Right lobe of liver (tissue), 6 donors: ENCODE measurements at regions of chr3 and their contacts with region 1.

Region 1: GRCh38 chr3:124492811-124493210 is 237.4 kb upstream of the UMPS start:
- DNase-seq: peak; percentile 76 to 78 (median 77)
- ATAC-seq: peak; percentile 94 to 98 (median 96)
- H3K4me3 ChIP-seq: no peak overlapping the region
- H3K27ac ChIP-seq: no peak overlapping the region
- H3K4me1 ChIP-seq: no peaks in the 10 kb centered on the region
- H3K27me3 ChIP-seq: no peaks in the 10 kb centered on the region
- CTCF ChIP-seq: peak; percentile 60 to 73 (median 65)
- POLR2A ChIP-seq: no peak

Region 2: DNA sequence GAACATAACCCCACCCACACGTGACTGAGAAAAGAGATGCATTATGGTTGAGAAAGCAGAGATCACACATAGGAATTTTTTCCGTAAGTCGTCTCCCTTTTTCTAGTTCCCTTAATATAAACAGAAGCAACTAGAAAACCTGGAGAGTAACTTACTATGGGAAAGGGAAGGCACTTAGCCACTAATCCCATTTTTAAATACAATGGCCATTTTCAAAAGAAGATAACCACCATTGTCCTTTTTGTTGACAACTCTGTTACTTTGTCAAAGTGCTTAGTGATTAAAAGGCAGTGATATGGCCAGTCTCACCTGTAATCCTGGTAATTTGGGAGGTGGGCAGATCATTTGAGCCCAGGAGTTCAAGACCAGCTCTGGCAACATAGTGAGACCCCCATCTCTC is 53.1 kb after region 1 on chr3:
- intact Hi-C with region 1: loop called (anchors 5 to 10 kb)
- DNase-seq: no peak
- ATAC-seq: no peak
- H3K4me3 ChIP-seq: no peak overlapping the region
- H3K27ac ChIP-seq: no peak overlapping the region
- H3K4me1 ChIP-seq: peaks cover 0 to 4% (median 0%) of the 10 kb centered on the region in 4 donors
- H3K27me3 ChIP-seq: no peaks in the 10 kb centered on the region
- CTCF ChIP-seq: no peak
- POLR2A ChIP-seq: no peak

Region 3: DNA sequence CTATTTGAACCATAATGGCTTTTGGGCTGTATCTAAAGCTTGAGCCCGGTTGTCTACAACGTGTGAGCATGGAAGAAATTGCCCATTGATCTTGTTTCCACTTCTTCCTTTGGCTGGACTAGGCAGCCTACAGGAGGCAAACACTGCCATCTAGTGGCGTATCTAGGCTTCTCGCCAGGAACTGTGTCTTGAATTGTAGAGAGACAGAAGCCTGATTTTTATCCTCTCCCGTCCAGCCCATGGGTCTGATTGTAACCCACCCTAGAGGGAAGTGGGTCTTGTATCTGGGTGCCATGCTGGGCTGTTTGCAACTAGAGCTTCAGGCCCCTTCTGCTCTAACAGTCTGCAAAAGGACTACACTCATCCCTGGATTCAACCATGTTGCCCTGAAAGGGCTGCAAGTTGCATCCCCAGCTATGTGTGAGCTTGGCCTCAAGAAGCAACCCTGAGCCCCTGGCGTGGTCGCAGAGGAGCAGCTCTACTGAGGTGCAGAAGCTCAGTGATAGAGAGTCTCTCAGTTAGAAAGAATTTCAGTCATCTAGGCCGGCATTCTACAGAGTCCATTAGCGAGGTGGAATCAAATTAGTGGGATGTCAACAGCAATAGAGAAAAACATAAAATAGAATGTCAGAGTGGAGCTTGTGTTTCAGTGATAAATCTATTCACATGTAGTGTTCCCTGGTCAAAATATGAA is 67.2 kb after region 1 on chr3:
- intact Hi-C with region 1: loop called in 1 of 2 experiments (anchors 10 kb)
- DNase-seq: peak; percentile 60 to 79 (median 68)
- ATAC-seq: peak; percentile 79 to 90 (median 84)
- H3K4me3 ChIP-seq: no peak overlapping the region
- H3K27ac ChIP-seq: no peak overlapping the region
- H3K4me1 ChIP-seq: peaks cover 0 to 18% (median under 1%) of the 10 kb centered on the region in 4 donors
- H3K27me3 ChIP-seq: no peaks in the 10 kb centered on the region
- CTCF ChIP-seq: peak; percentile 74 to 91 (median 88)
- POLR2A ChIP-seq: no peak